ENCODE measurements at regions of chr15 and their contacts with region 1.

Region 1: DNA sequence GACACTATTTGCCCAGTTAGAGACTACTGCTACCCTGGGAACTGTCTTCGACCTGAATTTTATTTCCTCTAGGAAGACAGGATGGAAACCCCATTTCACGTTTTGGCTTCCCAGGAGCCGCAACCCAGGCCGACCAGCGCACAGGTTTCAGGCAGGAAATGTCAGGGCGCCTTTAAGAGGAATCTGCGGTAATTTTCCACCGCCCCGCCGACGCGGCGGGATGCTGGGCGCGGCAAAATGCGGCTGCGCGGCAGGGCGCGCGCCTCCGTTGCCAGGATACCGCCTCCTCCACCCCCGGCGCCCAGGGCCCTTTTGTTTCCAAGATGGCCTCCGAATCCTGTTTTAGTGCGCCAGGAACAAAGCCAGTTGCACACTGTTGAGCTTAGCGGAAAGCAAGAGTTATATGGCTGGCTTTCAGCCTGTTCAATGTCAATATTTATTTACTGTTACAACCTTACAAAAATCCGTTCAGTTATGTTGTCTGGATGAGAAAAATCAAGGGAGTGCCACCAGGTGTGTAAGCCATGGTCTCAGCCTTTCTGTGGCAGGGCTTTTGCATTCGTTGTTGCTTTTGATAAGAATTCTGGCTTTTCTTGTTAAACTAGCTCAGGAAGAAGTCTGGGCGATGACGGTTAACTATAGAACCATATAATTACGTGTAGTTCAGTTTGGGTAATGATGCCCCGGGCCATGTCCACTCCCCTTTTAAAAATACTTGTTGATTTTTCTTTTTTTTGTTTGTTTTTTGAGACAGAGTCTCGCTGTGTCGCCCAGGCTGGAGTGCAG is 79.7 kb upstream of the CHD2 start:
- DNase-seq: peak; percentile 96 to 97
- ATAC-seq: peak; percentile 85 to 88
- H3K4me3 ChIP-seq: peak overlapping the region; percentile 46
- H3K27ac ChIP-seq: peak overlapping the region; percentile 90 to 92
- H3K4me1 ChIP-seq: peaks cover 52% of the 10 kb centered on the region
- CTCF ChIP-seq: no peak
- EP300 ChIP-seq: no peak
- POLR2A ChIP-seq: peak; percentile 57
- RAD21 ChIP-seq: peak in 1 of 2 experiments; percentile 3; a peak in 2 of 5 replicates

Region 2: DNA sequence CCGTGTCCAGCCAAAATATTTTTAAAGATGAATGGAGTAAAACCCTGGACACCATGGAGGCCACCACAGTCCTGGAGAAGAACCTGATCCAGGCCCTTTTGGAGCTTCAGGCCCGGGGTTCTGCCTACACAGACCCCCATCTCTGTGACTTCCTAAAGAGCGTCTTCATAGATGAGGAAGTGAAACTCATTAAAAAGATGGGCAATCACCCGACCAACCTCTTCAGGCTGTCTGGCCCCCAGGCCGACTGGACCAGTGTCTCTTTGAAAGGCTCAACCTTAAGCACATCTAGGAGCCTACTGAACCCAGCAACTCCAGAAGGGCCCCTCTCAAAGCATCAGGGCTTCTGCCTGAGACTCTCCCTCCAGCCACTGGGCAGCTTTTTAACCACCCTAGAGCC is 57.0 kb before region 1 on chr15:
- CTCF ChIA-PET with region 1: no interaction called
- POLR2A ChIA-PET with region 1: no interaction called
- DNase-seq: no peak
- ATAC-seq: no peak
- H3K4me3 ChIP-seq: no peak overlapping the region
- H3K27ac ChIP-seq: no peak overlapping the region
- H3K4me1 ChIP-seq: no peaks in the 10 kb centered on the region
- CTCF ChIP-seq: no peak
- EP300 ChIP-seq: no peak
- POLR2A ChIP-seq: no peak
- RAD21 ChIP-seq: no peak

Region 3: DNA sequence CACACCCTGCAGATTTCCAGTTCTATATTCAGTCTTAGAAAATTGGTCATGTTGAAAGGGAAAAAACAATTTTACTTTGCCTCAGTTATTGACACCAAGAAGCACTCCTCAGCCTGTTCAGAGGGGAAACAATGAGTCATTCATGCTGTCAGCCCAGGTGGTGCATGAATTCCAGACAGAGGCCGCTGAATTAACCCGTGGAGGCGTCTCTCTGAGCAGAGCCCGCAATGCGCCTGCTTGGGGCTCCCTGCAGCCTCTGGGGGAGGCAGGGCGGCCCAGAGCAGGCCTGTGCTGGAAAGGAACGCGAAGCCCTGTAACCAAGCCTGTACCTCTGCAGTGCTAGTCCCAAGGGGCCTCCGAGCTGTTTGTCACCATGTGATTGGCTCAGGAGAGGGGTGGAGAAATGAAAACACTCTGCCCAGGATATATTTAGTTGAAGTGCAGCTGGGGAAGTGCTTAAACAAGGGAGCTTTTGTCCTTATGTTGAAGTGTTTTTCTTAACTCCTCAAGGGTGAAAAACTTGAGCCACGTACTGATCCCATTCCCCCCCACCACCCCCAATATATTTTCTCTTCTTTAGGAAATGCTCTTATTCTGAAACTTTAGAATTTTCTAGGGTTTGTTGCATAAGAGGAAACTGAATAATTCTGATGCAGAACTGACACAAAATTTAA is 11.4 kb after region 1 on chr15:
- CTCF ChIA-PET with region 1: interaction called, 8 read pairs
- POLR2A ChIA-PET with region 1: interaction called, 25 read pairs
- DNase-seq: peak; percentile 95
- ATAC-seq: peak; percentile 100
- H3K4me3 ChIP-seq: peak overlapping the region; percentile 12; the same call in 2 of the 3 replicates
- H3K27ac ChIP-seq: peak overlapping the region; percentile 75 to 83
- H3K4me1 ChIP-seq: peaks cover 29% of the 10 kb centered on the region
- CTCF ChIP-seq: no peak
- EP300 ChIP-seq: no peak
- POLR2A ChIP-seq: peak; percentile 60
- RAD21 ChIP-seq: peak in 1 of 2 experiments; percentile 28; a peak in 2 of 5 replicates

Region 4: GRCh38 chr15:92868992-92869988 is 48.9 kb after region 1 on chr15:
- CTCF ChIA-PET with region 1: interaction called, 4 read pairs
- POLR2A ChIA-PET with region 1: interaction called, 14 read pairs
- DNase-seq: peak in 1 of 2 experiments; percentile 84
- ATAC-seq: peak; percentile 82 to 84
- H3K4me3 ChIP-seq: peak overlapping the region; percentile 13; the same call in 1 of the 3 replicates
- H3K27ac ChIP-seq: peak overlapping the region; percentile 84 to 90
- H3K4me1 ChIP-seq: peaks cover 40% of the 10 kb centered on the region
- CTCF ChIP-seq: no peak
- EP300 ChIP-seq: peak in 1 of 2 experiments; percentile 66; a peak in 1 of 5 replicates
- POLR2A ChIP-seq: no peak
- RAD21 ChIP-seq: 0 out of 5 replicates have a peak, but pooled peaks of 1 of the 2 experiments have one; percentile 21

Measured in A549 (cell line).